Left ventricle myocardium superior (tissue), 1 donor: ENCODE measurements at regions of chr14 and their contacts with region 1.

Region 1: DNA sequence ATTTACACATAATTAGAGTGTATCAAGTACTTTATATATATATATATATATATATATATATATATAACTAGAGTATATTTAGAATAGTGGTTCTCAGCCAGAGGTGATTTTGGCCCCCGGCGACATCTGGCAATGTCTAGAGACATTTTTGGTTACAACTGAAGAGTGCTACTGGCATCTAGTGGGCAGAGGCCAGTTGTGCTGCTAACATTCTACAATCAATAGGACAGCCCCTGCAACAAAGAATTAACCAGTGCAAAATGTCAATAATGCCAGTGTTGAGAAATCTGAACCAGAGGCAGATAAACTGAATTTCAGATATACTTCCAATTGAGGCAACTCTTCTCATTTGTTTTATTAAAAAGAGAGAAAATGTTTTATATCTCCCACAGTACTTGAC is 8.9 kb downstream of the GTF2A1 start:
- DNase-seq: peak; percentile 61
- ATAC-seq: peak; percentile 88

Region 2: GRCh38 chr14:80987235-80988032 is 224.4 kb before region 1 on chr14:
- intact Hi-C with region 1: loop called (anchors 5 kb)
- DNase-seq: no peak
- ATAC-seq: peak; percentile 76

Region 3: GRCh38 chr14:81157431-81157830 is 54.4 kb before region 1 on chr14:
- intact Hi-C with region 1: no loop called
- DNase-seq: no peak
- ATAC-seq: no peak